Activated CD4-positive, alpha-beta T cell treated with anti-CD3 and anti-CD28 coated beads, Interleukin-2, amount 10 ng/mL, durations not matched to agents 7 days and 5 days (primary cell): ENCODE measurements at regions of chr4 and their contacts with region 1.

Region 1: DNA sequence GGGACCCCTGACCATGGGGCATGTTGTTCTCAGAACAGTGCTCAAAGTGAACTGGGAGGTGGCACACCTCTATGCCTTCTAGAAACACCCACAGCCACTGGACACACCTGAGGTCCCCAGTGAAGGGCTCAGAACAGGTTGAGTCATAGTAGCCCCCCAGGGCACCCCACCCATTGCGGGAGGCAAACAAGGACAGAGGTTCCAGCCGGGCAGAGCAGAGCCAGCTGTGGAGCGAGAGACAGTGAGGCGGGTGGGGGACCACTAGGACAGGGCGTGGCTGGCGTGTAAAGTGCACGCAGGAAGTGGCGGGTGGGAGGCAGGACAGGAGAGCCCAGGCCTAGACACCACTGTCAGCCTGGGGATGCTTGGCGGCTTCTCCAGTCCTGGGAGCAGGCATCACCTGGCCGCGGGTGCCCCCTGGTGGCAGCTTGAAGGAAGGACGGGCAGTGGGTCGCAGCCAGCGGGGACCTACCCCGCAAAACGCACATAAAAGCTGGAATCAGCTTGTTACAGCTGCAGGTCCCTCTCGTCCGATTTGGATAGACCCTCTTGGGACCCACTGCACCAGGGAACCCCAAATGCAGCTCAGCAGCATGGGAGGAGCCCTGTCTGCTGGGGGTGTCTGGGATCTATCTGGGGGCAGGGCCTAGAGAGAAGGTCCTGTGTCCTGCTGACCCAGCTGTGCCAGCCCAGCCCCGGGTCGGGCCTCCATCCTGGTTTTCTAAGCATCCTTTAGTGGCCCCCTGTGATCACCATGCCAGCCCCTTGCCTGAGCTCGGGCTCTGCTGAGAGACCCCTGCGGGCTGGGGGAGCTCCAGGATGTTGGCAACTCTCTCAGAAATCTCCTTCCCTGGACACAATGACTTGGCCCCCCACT is 57.6 kb downstream of the WFS1 start:
- DNase-seq: peak; percentile 80
- H3K4me3 Mint-ChIP-seq: no peak overlapping the region
- H3K27ac Mint-ChIP-seq: no peak overlapping the region
- H3K4me1 Mint-ChIP-seq: peaks cover 13% of the 10 kb centered on the region
- H3K27me3 Mint-ChIP-seq: peaks cover 23% of the 10 kb centered on the region

Region 2: DNA sequence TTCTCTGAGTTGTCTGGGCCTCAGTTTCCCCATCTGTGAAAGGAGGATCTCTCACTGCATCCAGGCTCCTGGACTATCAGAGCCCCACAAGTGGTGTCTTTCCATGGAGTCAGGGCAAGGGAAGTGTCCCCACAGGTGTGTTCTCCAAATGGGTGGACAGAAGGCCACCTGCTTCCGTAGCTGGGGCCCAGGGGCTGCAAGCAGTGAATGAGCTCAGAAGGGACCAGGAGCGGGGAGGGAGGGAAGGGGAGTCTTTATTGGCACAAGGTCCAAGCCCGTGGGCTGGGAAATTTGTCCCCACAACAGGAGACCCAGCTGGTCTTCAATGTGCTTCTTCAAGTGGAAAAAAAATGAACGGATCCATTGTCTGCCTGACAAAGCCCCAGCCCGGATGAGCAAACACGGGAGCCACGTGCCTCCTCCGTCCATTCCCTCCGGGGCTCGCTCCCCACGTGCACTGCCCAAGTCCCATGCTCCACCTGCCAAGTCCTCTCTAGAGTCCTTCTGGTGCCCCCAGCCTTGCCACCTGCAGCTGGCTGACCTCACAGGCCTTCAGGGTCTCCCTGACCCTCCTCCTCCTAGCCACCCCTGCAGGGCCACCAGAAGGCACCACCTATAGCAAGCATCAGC is 198.9 kb before region 1 on chr4:
- CTCF ChIA-PET with region 1: no interaction called
- POLR2A ChIA-PET with region 1: no interaction called
- DNase-seq: no peak
- H3K4me3 Mint-ChIP-seq: no peak overlapping the region
- H3K27ac Mint-ChIP-seq: no peak overlapping the region
- H3K4me1 Mint-ChIP-seq: no peaks in the 10 kb centered on the region
- H3K27me3 Mint-ChIP-seq: peaks cover 6% of the 10 kb centered on the region

Region 3: DNA sequence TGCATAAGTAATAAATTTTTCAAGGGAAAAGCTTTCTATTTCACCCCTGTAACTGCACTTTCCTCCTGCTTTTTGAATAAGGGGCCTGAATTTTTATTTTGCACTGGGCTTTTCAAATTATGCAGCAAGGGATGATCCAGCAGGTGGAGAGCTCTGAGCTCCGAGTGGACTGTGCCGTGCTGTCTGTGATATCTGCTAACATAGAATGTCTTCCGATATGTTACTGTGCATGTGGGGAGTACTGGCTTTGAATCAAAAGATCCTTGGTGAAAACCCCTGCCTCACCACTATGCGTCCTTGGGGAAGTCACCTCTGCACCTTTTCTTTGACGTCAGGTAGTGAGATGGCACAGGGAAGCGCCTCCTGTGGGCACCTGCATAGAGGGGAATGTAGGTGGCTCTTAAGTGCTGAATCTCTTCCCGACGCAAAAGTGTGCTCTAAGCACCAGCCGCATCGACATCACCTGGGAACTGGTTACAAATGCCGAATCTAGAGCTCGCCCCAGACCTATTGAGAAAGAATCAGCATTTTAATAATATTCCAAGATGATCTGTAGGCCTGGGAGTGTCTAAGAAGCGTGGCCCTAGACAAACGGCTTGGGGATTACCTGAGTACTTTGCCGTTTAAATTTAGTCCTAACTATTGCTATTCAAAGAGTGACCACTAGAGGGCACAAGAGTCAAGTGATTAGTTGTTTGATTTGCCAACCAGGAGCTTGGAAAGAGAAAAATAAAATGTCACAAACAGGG is 76.9 kb before region 1 on chr4:
- CTCF ChIA-PET with region 1: interaction called, 27 read pairs
- POLR2A ChIA-PET with region 1: interaction called, 3 read pairs
- DNase-seq: peak; percentile 55
- H3K4me3 Mint-ChIP-seq: no peak overlapping the region
- H3K27ac Mint-ChIP-seq: no peak overlapping the region
- H3K4me1 Mint-ChIP-seq: peaks cover 2% of the 10 kb centered on the region
- H3K27me3 Mint-ChIP-seq: peaks cover 27% of the 10 kb centered on the region